ENCODE measurements at regions of chr9 and their contacts with region 1.

Region 1: DNA sequence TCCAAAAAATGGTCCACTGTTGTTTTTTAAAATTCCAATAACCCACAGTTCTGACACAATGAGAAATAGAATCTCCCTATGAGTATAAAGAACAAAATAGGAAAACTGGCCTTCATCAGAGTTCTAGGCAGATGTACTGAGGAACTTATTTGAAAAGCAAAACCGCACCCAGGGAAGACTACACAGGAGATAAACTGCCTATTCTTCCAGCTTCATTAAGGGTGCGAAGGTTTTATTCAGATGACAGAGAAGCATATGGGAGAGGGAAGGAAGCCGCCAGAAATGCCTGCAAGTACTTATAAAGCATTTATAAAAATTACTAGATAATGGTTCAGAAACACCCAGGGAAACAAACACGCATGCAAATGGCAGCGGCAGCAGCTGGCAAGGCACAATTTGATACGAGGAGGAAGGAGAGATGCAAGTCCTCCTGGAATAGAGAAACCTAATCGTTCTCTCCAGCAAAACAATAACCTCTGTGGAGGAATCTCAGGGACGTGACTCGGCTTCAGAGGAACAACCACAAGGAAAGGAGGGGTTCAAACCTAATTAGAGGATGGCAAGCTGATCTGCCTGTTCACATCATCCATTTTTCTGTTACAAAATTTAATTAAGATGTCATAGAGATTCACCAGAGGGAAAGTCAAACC is 9.0 kb downstream of the TTLL11 start:
- DNase-seq: no peak
- ATAC-seq: no peak
- H3K4me3 ChIP-seq: no peak overlapping the region
- H3K27ac ChIP-seq: no peak overlapping the region
- H3K4me1 ChIP-seq: peaks cover 11% of the 10 kb centered on the region
- H3K27me3 ChIP-seq: no peaks in the 10 kb centered on the region
- CTCF ChIP-seq: no peak
- POLR2A ChIP-seq: no peak
- RAD21 ChIP-seq: no peak

Region 2: GRCh38 chr9:121201738-121202533 is 882.2 kb before region 1 on chr9 and contains the start of gene RAB14:
- CTCF ChIA-PET with region 1: no interaction called
- POLR2A ChIA-PET with region 1: no interaction called
- dilution Hi-C with region 1: no loop called
- in situ Hi-C with region 1: no loop called
- intact Hi-C with region 1: no loop called
- DNase-seq: peak; percentile 97
- ATAC-seq: peak; percentile 94
- H3K4me3 ChIP-seq: peak within 1 kb of the TSS; percentile 77
- H3K27ac ChIP-seq: peak within 1 kb of the TSS; percentile 90
- H3K4me1 ChIP-seq: peaks cover 7% of the 10 kb centered on the region
- H3K27me3 ChIP-seq: no peaks in the 10 kb centered on the region
- CTCF ChIP-seq: peak; percentile 53
- POLR2A ChIP-seq: peak; percentile 77
- RAD21 ChIP-seq: no peak
- total RNA-seq, gene RAB14: 20.1 and 36.1 TPM in 2 replicates

Region 3: GRCh38 chr9:122036988-122037387 is 47.2 kb before region 1 on chr9:
- CTCF ChIA-PET with region 1: interaction called, 3 read pairs
- POLR2A ChIA-PET with region 1: no interaction called
- dilution Hi-C with region 1: no loop called
- in situ Hi-C with region 1: no loop called
- intact Hi-C with region 1: loop called (anchors 5 kb)
- DNase-seq: peak; percentile 68
- ATAC-seq: peak; percentile 92
- H3K4me3 ChIP-seq: no peak overlapping the region
- H3K27ac ChIP-seq: no peak overlapping the region
- H3K4me1 ChIP-seq: peaks cover 8% of the 10 kb centered on the region
- H3K27me3 ChIP-seq: no peaks in the 10 kb centered on the region
- CTCF ChIP-seq: no peak
- POLR2A ChIP-seq: no peak
- RAD21 ChIP-seq: no peak

Measured in IMR-90 (cell line).